Activated CD4-positive, alpha-beta memory T cell treated with anti-CD3 and anti-CD28 coated beads, Interleukin-2, amount 10 ng/mL, durations not matched to agents 7 days and 5 days (primary cell): ENCODE measurements at regions of chr19 and their contacts with region 1.

Region 1: DNA sequence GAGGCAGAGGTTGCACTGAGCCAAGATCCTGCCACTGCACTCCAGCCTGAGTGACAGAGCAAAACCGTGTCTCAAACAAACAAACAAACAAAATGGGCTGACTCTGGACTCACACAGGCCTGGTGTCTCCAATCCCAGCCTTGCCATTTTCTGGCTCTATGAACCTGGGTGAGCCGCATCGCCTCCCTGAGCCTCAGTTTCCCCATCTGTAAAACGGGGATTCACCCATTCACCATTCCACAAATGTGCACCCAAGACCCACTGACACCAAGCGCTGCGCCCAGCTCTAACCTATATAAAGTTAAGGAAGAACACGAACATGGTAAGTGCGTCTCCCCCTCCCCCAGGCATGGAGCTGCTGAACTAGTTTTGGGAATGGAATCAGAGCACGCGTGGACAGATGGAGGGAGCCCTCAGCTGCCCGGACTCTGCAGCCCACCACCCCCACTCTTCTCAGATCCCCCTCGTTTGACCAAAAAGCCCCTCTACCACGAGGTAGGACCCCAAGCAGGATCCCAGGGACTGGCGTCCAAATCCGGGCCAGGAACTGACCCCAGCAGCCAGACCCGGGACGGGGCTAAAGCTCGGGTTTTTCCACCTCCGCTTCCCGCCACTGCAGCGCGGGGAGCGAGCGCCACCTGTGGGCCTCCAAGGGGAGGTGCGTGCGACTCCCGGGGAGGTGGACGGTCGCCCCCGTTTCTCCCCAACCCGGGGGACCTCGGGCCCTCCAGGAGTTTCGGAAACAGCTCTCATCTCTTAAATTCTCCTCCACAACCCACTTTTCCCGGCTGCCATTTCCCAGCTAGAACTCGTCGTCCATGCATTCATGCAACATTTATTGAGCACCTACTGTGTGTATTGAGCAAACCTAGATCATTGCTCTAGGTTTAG is 33.0 kb upstream of the ADGRE5 start:
- DNase-seq: peak; percentile 74
- H3K4me3 Mint-ChIP-seq: peak overlapping the region; percentile 32
- H3K27ac Mint-ChIP-seq: peak overlapping the region; percentile 24
- H3K4me1 Mint-ChIP-seq: peaks cover 24% of the 10 kb centered on the region
- H3K27me3 Mint-ChIP-seq: no peaks in the 10 kb centered on the region

Region 2: DNA sequence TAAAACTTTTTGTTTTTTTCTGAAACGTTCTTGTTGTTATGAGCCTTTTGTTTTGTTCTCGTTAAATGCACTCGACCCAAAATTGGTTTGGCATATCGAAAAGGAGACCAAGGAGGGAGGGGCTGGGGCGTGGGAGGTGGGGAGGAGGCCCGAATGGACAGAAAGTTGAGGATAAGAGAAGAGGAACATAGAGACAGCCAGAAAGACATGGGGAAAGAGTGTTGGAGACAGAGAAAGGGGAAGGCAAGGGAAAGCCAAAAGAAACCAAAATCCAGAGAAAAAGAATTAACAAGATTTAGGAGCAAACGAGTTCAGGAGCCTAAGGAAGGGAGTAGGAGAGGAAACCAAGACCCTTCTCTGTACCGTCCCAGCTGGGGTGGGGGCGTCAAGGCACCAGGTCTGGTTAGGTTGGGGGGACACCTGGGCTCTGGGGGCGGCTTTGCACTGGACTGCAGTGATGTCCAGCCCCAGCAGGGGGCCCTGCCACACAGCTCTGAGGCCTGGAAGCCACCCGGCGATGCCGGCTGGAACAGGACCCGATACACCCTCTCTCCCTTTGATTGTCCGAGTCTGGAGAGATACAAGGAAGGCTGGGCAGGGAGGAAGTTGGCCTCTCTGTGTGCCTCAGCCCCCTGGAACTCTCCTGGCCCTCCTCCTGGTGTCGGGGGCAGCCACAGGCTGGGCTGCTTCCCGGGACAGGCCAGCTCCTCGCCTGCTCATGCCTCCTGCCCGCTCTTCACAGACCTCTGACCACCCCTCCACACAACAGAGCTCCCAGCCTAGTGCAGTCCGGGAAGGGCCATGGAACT is 200.2 kb before region 1 on chr19:
- CTCF ChIA-PET with region 1: interaction called, 12 read pairs
- POLR2A ChIA-PET with region 1: interaction called, 6 read pairs
- DNase-seq: peak; percentile 61
- H3K4me3 Mint-ChIP-seq: peak overlapping the region; percentile 84
- H3K27ac Mint-ChIP-seq: peak overlapping the region; percentile 98
- H3K4me1 Mint-ChIP-seq: peaks cover 39% of the 10 kb centered on the region
- H3K27me3 Mint-ChIP-seq: no peaks in the 10 kb centered on the region

Region 3: DNA sequence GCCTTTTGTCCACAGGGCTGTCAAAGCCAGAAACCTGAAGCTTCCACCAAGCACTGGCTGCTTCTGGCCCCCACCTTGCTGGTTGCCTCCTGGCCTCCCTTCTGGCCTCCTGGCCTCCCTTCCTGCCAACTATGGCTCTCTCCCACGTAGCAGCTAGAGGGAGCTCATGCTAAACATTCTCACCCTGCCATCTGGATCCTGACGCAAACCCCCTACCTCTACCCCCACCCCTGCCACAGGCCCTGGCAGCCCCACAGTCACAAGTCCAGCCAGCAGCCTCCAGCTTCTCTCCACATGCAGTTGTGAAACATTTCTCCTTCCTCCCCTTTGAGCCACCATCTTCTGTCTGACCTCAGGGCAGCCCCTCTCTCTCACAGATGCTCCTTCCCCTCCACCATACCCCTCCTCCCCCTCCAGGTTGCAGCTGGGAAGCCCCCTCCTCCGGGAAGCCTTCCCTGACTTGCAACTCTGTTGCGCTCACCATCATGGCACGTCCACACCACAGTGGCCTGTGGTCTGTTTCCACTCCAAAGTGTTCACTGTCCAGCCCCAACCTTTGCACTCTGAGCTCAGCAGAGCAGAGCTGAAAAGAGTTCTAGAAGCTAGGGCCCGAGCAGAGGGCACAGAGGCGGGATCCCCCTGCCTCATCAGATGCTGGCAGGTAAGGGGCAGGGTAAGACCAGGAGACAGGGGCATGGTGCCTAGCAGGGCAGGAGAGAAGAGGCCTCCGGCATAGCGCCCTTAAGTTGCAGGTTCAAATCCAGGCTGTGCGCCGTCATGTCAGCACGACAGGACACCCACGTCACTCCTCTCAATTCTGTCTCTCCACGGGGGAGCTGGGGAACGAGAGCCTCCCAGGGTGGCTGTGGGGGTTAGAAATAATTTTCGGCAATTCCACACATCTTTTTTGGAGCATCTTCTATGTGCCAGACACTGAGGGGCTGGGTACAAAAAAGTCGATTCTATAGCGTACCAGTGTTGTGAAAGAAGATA is 149.6 kb before region 1 on chr19:
- CTCF ChIA-PET with region 1: interaction called, 53 read pairs
- POLR2A ChIA-PET with region 1: interaction called, 3 read pairs
- DNase-seq: no peak
- H3K4me3 Mint-ChIP-seq: no peak overlapping the region
- H3K27ac Mint-ChIP-seq: no peak overlapping the region
- H3K4me1 Mint-ChIP-seq: peaks cover 15% of the 10 kb centered on the region
- H3K27me3 Mint-ChIP-seq: peaks cover 6% of the 10 kb centered on the region

Region 4: GRCh38 chr19:14218620-14219330 is 129.5 kb before region 1 on chr19:
- CTCF ChIA-PET with region 1: interaction called, 15 read pairs
- POLR2A ChIA-PET with region 1: no interaction called
- DNase-seq: no peak
- H3K4me3 Mint-ChIP-seq: no peak overlapping the region
- H3K27ac Mint-ChIP-seq: no peak overlapping the region
- H3K4me1 Mint-ChIP-seq: peaks cover 22% of the 10 kb centered on the region
- H3K27me3 Mint-ChIP-seq: peaks cover 4% of the 10 kb centered on the region

Region 5: DNA sequence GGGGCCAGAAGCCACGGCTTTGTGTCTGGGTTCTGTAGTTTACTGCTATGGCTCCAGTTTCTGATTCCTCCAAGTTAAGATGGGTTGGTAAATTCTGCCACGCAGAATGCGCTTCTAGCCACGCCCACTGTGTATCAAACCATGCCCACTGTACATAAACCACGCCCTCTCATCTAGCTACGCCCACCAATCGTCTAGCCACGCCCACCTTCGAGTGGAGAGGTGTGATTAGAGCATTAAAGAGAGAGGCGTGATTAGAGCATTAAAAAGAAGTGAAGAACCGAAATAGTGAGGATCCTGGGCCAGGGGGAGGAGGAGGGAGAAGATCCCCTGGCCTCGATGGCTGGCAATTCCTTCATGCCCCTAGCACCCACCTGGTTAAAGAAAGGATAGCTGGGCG is 10.7 kb before region 1 on chr19:
- CTCF ChIA-PET with region 1: interaction called, 16 read pairs
- POLR2A ChIA-PET with region 1: no interaction called
- DNase-seq: peak; percentile 46
- H3K4me3 Mint-ChIP-seq: no peak overlapping the region
- H3K27ac Mint-ChIP-seq: no peak overlapping the region
- H3K4me1 Mint-ChIP-seq: peaks cover 13% of the 10 kb centered on the region
- H3K27me3 Mint-ChIP-seq: no peaks in the 10 kb centered on the region

Region 6: DNA sequence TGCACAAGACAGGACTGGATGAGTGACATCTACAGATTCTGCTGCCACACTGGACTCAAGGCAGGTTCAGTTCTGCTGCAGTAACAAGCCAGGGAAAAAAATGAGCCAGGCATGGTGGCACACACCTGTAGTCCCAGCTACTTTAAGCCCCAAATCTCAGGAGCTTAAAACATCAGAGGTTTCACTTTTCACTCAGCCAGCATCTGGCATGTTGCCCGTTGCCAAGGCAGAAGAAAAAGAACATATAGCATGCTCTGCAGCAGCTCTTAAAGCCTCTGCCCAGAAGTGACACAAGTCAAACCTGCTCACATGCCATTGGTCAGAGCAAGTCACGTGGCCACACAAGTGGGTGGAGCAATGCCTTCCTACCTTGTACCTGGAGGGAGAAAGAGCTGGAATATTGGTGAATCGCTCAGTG is 18.3 kb after region 1 on chr19:
- CTCF ChIA-PET with region 1: interaction called, 22 read pairs
- POLR2A ChIA-PET with region 1: interaction called, 68 read pairs
- DNase-seq: peak; percentile 90
- H3K4me3 Mint-ChIP-seq: peak overlapping the region; percentile 61
- H3K27ac Mint-ChIP-seq: peak overlapping the region; percentile 89
- H3K4me1 Mint-ChIP-seq: peaks cover 73% of the 10 kb centered on the region
- H3K27me3 Mint-ChIP-seq: no peaks in the 10 kb centered on the region

Region 7: DNA sequence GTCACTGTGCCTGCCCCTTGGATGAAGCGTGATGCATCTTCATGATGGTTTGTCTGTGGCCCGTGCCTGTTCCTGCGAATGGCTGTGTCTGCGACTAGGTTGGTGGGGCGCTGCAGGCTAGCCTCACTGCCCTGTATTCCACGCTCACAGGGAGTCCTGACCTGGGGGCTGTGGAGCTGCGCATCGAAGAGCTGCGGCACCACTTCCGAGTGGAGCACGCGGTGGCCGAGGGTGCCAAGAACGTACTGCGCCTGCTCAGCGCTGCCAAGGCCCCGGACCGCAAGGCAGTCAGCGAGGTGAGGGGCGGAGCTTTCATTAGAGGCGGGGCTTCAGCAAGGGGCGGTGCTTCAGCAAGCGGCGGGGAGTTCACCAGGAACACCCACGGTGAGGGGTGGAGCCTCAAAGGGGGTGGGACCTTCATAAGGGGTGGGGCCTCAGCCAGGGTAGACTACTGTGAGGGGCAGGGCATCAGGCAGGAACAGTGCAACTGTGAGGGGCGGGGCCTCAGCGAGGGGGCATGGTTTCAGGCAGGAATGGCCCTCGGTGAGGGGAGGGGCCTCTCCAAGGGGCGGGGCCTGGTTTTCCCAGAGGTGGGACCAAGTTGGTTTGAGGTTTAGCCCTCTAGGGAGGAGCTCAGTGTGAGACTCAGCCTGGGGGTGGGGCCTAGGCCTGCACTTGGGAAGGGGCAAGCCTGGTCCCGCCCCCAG is 102.1 kb after region 1 on chr19:
- CTCF ChIA-PET with region 1: no interaction called
- POLR2A ChIA-PET with region 1: no interaction called
- DNase-seq: peak; percentile 78
- H3K4me3 Mint-ChIP-seq: no peak overlapping the region
- H3K27ac Mint-ChIP-seq: no peak overlapping the region
- H3K4me1 Mint-ChIP-seq: peaks cover 12% of the 10 kb centered on the region
- H3K27me3 Mint-ChIP-seq: no peaks in the 10 kb centered on the region

Region 8: GRCh38 chr19:14517840-14518505 is 169.7 kb after region 1 on chr19 and contains the start of gene DNAJB1:
- CTCF ChIA-PET with region 1: no interaction called
- POLR2A ChIA-PET with region 1: no interaction called
- DNase-seq: peak; percentile 79
- H3K4me3 Mint-ChIP-seq: peak within 1 kb of the TSS; percentile 79
- H3K27ac Mint-ChIP-seq: peak within 1 kb of the TSS; percentile 93
- H3K4me1 Mint-ChIP-seq: peaks cover 64% of the 10 kb centered on the region
- H3K27me3 Mint-ChIP-seq: no peaks in the 10 kb centered on the region
- total RNA-seq, gene DNAJB1: 108 to 114 TPM